ENCODE measurements at regions of chr12 and their contacts with region 1.

Region 1: DNA sequence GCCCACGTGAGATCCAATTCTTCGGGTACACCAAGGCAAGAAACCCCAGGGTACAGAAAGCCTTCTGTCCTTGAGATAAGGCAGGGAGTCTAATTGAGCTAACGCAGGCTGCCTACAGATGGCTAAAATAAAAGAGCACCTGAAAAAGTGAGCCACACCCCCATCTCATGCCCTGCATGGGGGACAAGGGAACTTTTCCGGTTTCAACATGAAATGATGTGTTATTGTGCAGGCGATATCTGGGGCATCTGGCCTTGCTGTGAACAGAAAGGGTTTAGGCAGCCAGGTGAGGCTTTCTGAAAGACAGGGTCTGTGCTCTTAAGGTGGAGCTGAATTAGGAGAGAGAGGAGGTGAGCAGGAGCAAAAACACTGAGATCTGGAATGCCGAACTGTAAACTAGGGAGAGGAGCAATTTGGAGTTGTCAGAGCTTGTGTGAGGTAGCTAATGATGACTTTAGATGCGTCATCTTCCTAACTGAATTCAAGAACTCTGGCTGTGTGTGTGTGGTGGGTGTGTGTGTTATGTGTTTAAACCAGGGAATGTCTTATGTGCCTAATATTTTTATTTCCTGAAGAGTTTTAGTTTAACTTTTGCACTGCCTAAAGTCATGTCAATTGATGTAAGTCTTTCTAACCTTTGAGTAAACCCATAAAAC is 20.1 kb upstream of the LDHB start:
- DNase-seq: no peak
- ATAC-seq: peak; percentile 45
- H3K4me3 ChIP-seq: no peak overlapping the region
- H3K27ac ChIP-seq: no peak overlapping the region
- H3K4me1 ChIP-seq: peaks cover 0 to 3% of the 10 kb centered on the region in 2 experiments; a peak in 4 of 5 replicates
- H3K27me3 ChIP-seq: no peaks in the 10 kb centered on the region
- CTCF ChIP-seq: no peak
- EP300 ChIP-seq: no peak
- POLR2A ChIP-seq: no peak
- RAD21 ChIP-seq: no peak

Region 2: DNA sequence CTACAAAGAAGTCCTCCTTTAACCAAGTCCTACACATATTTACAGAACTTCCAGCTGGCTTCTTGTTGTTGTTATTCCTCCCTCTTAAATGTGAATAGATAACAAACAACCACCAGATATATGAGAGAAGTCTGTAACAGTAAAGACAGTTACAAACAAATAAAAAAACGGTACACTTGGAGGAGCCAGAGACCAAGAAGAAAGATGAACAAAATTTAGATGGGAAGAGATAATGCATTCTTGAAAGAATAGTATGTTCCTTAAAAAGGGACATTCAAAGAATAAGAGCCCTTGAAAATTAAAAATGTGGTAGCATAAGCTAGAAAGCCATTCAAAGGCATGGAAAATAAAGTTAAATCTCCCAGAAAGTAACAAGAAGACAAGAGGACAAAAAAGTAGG is 369.0 kb before region 1 on chr12:
- CTCF ChIA-PET with region 1: interaction called, 6 read pairs
- POLR2A ChIA-PET with region 1: no interaction called
- in situ Hi-C with region 1: loop called (anchors 10 kb)
- intact Hi-C with region 1: loop called (anchors 2 kb)
- DNase-seq: no peak
- ATAC-seq: no peak
- H3K4me3 ChIP-seq: no peak overlapping the region
- H3K27ac ChIP-seq: no peak overlapping the region
- H3K4me1 ChIP-seq: no peaks in the 10 kb centered on the region
- H3K27me3 ChIP-seq: no peaks in the 10 kb centered on the region
- CTCF ChIP-seq: peak in 1 of 3 experiments; percentile 15; a peak in 1 of 6 replicates
- EP300 ChIP-seq: no peak
- POLR2A ChIP-seq: no peak
- RAD21 ChIP-seq: peak in 1 of 2 experiments; percentile 28; a peak in 1 of 4 replicates

Region 3: GRCh38 chr12:21501379-21501956 is 176.3 kb before region 1 on chr12 and contains the starts of genes GOLT1B and RECQL:
- CTCF ChIA-PET with region 1: interaction called, 3 read pairs
- POLR2A ChIA-PET with region 1: no interaction called
- in situ Hi-C with region 1: no loop called
- intact Hi-C with region 1: loop called (anchors 5 kb)
- DNase-seq: peak; percentile 89 to 95 (median 92)
- ATAC-seq: peak; percentile 95
- H3K4me3 ChIP-seq: peak within 1 kb of the TSS; percentile 100
- H3K27ac ChIP-seq: peak within 1 kb of the TSS; percentile 92
- H3K4me1 ChIP-seq: peaks cover 0 to 13% of the 10 kb centered on the region in 2 experiments; a peak in 2 of 5 replicates
- H3K27me3 ChIP-seq: no peaks in the 10 kb centered on the region
- CTCF ChIP-seq: no peak
- EP300 ChIP-seq: no peak
- POLR2A ChIP-seq: peak; percentile 79
- RAD21 ChIP-seq: no peak
- polyA plus RNA-seq, gene GOLT1B: 46.5 to 66.1 TPM
- polyA plus RNA-seq, gene RECQL: 28.5 to 33.7 TPM

Region 4: DNA sequence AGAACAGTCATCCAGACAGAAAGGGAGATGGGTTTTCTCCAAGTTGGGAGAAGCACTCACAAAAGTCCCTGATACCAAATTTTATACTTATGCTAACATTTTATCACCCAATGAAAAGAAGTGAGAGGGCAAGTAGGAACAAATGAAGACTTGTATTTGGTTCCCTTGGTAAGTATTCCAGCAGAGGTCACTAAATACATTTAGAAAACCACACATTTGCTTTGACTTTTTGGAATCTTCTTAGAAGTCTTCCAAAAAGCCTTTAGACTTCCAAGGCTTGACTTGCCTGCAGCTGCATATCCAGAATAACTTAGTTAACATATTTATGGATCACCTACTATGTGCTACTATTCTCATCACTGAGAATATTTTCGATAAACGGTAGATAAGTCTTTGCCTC is 70.0 kb before region 1 on chr12:
- CTCF ChIA-PET with region 1: interaction called, 3 read pairs
- POLR2A ChIA-PET with region 1: no interaction called
- in situ Hi-C with region 1: no loop called
- intact Hi-C with region 1: loop called (anchors 2 kb)
- DNase-seq: no peak
- ATAC-seq: no peak
- H3K4me3 ChIP-seq: no peak overlapping the region
- H3K27ac ChIP-seq: no peak overlapping the region
- H3K4me1 ChIP-seq: no peaks in the 10 kb centered on the region
- H3K27me3 ChIP-seq: no peaks in the 10 kb centered on the region
- CTCF ChIP-seq: peak in 2 of 3 experiments; percentile 1 to 40; a peak in 3 of 6 replicates
- EP300 ChIP-seq: no peak
- POLR2A ChIP-seq: no peak
- RAD21 ChIP-seq: peak; percentile 53 to 76

Measured in K562 (cell line).